Activated CD4-positive, alpha-beta memory T cell treated with anti-CD3 and anti-CD28 coated beads for 36 hours (primary cell): ENCODE measurements at regions of chr19 and their contacts with region 1.

Region 1: GRCh38 chr19:53103198-53103944 is at the start of gene ZNF160:
- DNase-seq: peak; percentile 99
- H3K4me3 Mint-ChIP-seq: peak within 1 kb of the TSS; percentile 89
- H3K27ac Mint-ChIP-seq: peak within 1 kb of the TSS; percentile 81
- H3K4me1 Mint-ChIP-seq: peaks cover 28% of the 10 kb centered on the region
- H3K27me3 Mint-ChIP-seq: peaks cover 2% of the 10 kb centered on the region
- total RNA-seq, gene ZNF160: 26.3 to 28.9 TPM

Region 2: GRCh38 chr19:52993323-52994178 is 109.8 kb before region 1 on chr19:
- CTCF ChIA-PET with region 1: no interaction called
- POLR2A ChIA-PET with region 1: no interaction called
- intact Hi-C with region 1: loop called (anchors 5 kb)
- DNase-seq: peak; percentile 92
- H3K4me3 Mint-ChIP-seq: peak overlapping the region; percentile 81
- H3K27ac Mint-ChIP-seq: peak overlapping the region; percentile 42
- H3K4me1 Mint-ChIP-seq: peaks cover 11% of the 10 kb centered on the region
- H3K27me3 Mint-ChIP-seq: peaks cover 1% of the 10 kb centered on the region

Region 3: DNA sequence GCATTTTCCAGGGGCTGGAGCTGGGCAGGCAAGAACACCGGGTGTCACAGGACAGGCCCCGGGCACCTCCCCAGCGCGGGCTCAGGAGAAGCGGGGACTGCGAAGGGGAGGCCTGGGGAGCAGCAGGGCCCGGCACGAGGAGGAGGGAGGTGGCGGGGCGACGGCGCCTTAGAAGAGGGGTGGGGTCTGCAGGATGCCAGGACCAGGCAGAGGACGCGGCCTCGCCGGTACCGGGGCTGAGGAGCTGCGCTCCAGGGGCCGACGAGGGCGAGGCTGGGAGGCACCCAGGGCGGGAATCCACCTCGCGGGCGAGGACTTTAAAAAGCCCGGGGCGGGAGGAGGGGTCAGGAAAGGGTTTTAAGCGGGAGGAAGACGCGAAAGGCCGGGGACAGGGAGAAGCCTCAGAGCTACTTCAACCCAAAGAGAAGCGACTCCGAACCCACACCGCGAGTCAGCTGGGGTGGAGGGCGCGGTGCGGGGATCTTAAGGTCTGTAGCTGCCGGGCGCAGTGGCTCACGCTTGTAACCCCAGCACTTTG is 54.8 kb after region 1 on chr19:
- CTCF ChIA-PET with region 1: no interaction called
- POLR2A ChIA-PET with region 1: no interaction called
- intact Hi-C with region 1: loop called (anchors 2 kb)
- DNase-seq: peak; percentile 62
- H3K4me3 Mint-ChIP-seq: peak overlapping the region; percentile 81
- H3K27ac Mint-ChIP-seq: peak overlapping the region; percentile 80
- H3K4me1 Mint-ChIP-seq: peaks cover 15% of the 10 kb centered on the region
- H3K27me3 Mint-ChIP-seq: no peaks in the 10 kb centered on the region